ENCODE measurements at regions of chr3 and their contacts with region 1.

Region 1: GRCh38 chr3:179432021-179432420 is 19.2 kb downstream of the GNB4 start:
- H3K4me3 Mint-ChIP-seq: peak overlapping the region; percentile 52
- H3K27ac Mint-ChIP-seq: peak overlapping the region; percentile 84
- H3K4me1 Mint-ChIP-seq: peaks cover 72% of the 10 kb centered on the region
- H3K27me3 Mint-ChIP-seq: no peaks in the 10 kb centered on the region

Region 2: DNA sequence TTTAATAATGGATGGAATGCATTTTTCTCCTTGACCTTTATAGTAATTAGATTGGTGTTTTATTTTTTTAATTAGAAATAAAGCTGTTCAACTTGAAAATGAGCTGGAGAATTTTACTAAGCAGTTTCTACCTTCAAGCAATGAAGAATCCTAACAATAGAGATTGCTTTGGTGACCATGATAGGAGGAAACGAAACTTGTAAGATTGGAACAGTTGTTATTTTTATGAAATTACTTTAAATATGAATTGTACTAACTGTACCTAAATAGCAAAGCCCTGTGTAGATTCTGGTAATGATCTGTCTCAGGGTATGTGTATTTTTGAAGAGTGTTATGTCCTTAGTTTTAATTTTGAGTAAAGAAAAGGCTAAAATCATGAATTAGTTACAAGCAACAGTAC is 40.1 kb before region 1 on chr3:
- intact Hi-C with region 1: no loop called
- H3K4me3 Mint-ChIP-seq: no peak overlapping the region
- H3K27ac Mint-ChIP-seq: no peak overlapping the region
- H3K4me1 Mint-ChIP-seq: no peaks in the 10 kb centered on the region
- H3K27me3 Mint-ChIP-seq: no peaks in the 10 kb centered on the region

Region 3: DNA sequence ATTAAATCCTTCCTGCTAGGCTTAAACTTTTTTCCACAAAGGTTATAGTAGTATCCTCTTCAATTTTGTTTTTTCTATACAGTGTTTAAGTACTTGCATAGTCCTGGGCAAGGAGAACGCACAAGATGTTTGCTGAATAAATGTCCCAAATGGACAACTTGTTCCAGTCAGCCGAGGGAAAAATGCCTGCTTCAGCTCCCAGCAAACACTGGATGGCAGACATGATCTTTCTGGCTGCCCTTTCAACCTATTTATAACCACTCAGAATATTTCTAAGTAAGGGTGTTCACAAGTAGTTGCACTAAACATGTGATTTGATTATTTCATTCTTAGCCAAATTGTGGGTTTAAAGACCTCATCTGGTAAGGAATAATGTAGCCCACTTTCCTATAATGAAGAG is 10.5 kb before region 1 on chr3:
- intact Hi-C with region 1: no loop called
- H3K4me3 Mint-ChIP-seq: no peak overlapping the region
- H3K27ac Mint-ChIP-seq: no peak overlapping the region
- H3K4me1 Mint-ChIP-seq: no peaks in the 10 kb centered on the region
- H3K27me3 Mint-ChIP-seq: no peaks in the 10 kb centered on the region

Region 4: GRCh38 chr3:179852142-179852905 is 420.3 kb after region 1 on chr3:
- intact Hi-C with region 1: loop called (anchors 5 kb)
- H3K4me3 Mint-ChIP-seq: no peak overlapping the region
- H3K27ac Mint-ChIP-seq: peak overlapping the region; percentile 74
- H3K4me1 Mint-ChIP-seq: peaks cover 27% of the 10 kb centered on the region
- H3K27me3 Mint-ChIP-seq: no peaks in the 10 kb centered on the region